ENCODE measurements at regions of chr22 and their contacts with region 1.

Region 1: DNA sequence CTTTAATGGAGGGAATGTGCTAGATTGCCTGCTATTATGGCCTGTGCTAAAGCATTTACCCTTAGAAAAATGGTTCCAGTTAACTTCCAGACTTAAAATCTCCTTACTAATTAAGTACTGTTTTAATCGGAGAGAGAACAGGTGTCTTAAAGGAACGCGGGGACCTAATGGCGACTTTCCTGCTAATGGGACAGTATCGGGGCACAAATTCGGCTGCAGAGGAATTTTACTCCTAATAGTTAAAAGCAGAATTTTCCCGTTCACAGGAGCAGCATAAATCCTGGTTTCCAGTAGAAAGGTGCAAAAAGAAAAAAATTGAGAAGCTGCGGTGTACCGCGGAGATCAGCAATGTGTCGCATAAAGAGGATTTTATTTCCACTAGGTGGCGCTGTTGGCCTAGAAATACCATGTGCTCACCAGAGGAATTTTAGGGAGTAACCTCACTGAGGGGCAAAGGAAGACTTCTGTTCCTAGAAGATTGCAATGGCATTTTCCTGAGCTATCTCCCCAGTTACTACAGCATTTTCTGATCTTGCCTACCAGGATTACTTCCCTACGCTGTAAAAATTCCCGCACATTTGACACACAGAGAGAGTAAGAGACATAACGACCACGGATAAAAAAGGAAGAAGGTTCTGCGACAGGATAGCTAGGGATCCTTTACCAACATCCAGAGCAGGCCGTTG is 44.5 kb downstream of the ZNF280B start:
- DNase-seq: peak; percentile 97 to 99 (median 99)
- ATAC-seq: peak; percentile 97
- H3K4me3 ChIP-seq: no peak overlapping the region
- H3K27ac ChIP-seq: no peak overlapping the region
- H3K4me1 ChIP-seq: peaks cover 0 to 2% of the 10 kb centered on the region in 2 experiments; a peak in 1 of 5 replicates
- H3K27me3 ChIP-seq: peaks cover 13 to 18% of the 10 kb centered on the region in 2 experiments; a peak in 4 of 5 replicates
- CTCF ChIP-seq: peak in 2 of 3 experiments; percentile 100; a peak in 4 of 6 replicates
- EP300 ChIP-seq: no peak; the same call in 1 of the 2 replicates
- POLR2A ChIP-seq: no peak
- RAD21 ChIP-seq: peak in 1 of 2 experiments; percentile 100; a peak in 2 of 4 replicates

Region 2: GRCh38 chr22:21657361-21658032 is 806.5 kb before region 1 on chr22:
- CTCF ChIA-PET with region 1: no interaction called
- POLR2A ChIA-PET with region 1: no interaction called
- in situ Hi-C with region 1: no loop called
- intact Hi-C with region 1: no loop called
- DNase-seq: peak; percentile 100
- ATAC-seq: peak; percentile 95
- H3K4me3 ChIP-seq: peak overlapping the region; percentile 47
- H3K27ac ChIP-seq: peak overlapping the region; percentile 47
- H3K4me1 ChIP-seq: peaks cover 21 to 42% of the 10 kb centered on the region in 2 experiments
- H3K27me3 ChIP-seq: no peaks in the 10 kb centered on the region
- CTCF ChIP-seq: peak in 2 of 3 experiments; percentile 79 to 89; a peak in 4 of 6 replicates
- EP300 ChIP-seq: peak; percentile 19; the same call in 1 of the 2 replicates
- POLR2A ChIP-seq: no peak
- RAD21 ChIP-seq: no peak

Region 3: DNA sequence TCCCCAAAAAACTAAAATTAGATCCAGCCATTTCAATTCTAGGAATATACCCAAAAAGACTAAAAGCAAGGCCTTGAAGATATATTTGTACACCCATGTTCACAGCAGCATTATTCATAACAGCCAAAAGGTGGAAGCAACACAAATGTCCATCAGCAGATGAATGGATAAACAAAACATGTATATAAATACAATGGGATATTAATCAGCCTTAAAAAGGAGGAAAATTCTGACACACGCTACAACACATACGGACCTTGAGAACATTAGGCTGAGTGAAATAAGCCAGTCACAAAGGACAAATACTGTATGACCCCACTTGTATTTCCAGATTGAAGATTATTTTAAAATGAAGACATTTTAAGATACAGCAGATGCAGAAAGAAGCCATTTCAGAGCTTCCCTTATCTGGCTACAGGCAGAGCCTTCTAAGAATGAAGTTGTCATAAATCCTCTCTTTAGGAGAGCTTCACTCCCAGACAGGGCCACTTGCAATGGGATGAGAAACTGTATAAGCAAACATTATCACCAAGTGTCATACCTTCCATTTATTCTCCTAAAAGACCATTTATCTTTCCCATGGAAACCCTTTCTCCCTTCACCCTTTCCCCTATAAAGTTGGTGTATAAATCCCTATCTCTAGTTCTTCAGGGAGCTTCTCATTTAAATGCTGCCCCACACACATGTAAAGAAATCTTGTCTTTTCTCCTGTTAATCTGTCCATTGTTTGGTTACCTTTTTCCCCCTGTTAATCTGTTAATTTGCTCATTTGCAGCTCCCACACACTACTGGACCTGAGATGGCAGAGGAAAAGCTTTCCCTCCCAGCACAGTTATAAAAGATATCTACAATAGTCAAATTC is 462.1 kb before region 1 on chr22:
- CTCF ChIA-PET with region 1: no interaction called
- POLR2A ChIA-PET with region 1: no interaction called
- in situ Hi-C with region 1: no loop called
- intact Hi-C with region 1: no loop called
- DNase-seq: peak in 2 of 4 experiments; percentile 82 to 89
- ATAC-seq: peak; percentile 84
- H3K4me3 ChIP-seq: no peak overlapping the region
- H3K27ac ChIP-seq: peak overlapping the region; percentile 12; the same call in 1 of the 3 replicates
- H3K4me1 ChIP-seq: peaks cover 11 to 29% of the 10 kb centered on the region in 2 experiments
- H3K27me3 ChIP-seq: peaks cover 0 to 6% of the 10 kb centered on the region in 2 experiments; a peak in 3 of 5 replicates
- CTCF ChIP-seq: no peak
- EP300 ChIP-seq: no peak
- POLR2A ChIP-seq: no peak
- RAD21 ChIP-seq: no peak

Region 4: GRCh38 chr22:22374579-22374978 is 89.4 kb before region 1 on chr22:
- CTCF ChIA-PET with region 1: no interaction called
- POLR2A ChIA-PET with region 1: no interaction called
- in situ Hi-C with region 1: no loop called
- intact Hi-C with region 1: no loop called
- DNase-seq: no peak
- ATAC-seq: no peak
- H3K4me3 ChIP-seq: no peak overlapping the region
- H3K27ac ChIP-seq: no peak overlapping the region
- H3K4me1 ChIP-seq: no peaks in the 10 kb centered on the region
- H3K27me3 ChIP-seq: peaks cover 2 to 42% of the 10 kb centered on the region in 2 experiments; a peak in 3 of 5 replicates
- CTCF ChIP-seq: no peak
- EP300 ChIP-seq: no peak
- POLR2A ChIP-seq: no peak
- RAD21 ChIP-seq: no peak

Region 5: GRCh38 chr22:22431271-22432220 is 32.5 kb before region 1 on chr22:
- CTCF ChIA-PET with region 1: interaction called, 17 read pairs
- POLR2A ChIA-PET with region 1: no interaction called
- in situ Hi-C with region 1: no loop called
- intact Hi-C with region 1: loop called (anchors 1 kb)
- DNase-seq: peak; percentile 95 to 99 (median 98)
- ATAC-seq: peak; percentile 98
- H3K4me3 ChIP-seq: no peak overlapping the region
- H3K27ac ChIP-seq: no peak overlapping the region
- H3K4me1 ChIP-seq: no peaks in the 10 kb centered on the region
- H3K27me3 ChIP-seq: peaks cover 18 to 32% of the 10 kb centered on the region in 2 experiments; a peak in 4 of 5 replicates
- CTCF ChIP-seq: peak; percentile 97 to 100 (median 99)
- EP300 ChIP-seq: no peak
- POLR2A ChIP-seq: no peak
- RAD21 ChIP-seq: peak; percentile 92 to 99

Region 6: DNA sequence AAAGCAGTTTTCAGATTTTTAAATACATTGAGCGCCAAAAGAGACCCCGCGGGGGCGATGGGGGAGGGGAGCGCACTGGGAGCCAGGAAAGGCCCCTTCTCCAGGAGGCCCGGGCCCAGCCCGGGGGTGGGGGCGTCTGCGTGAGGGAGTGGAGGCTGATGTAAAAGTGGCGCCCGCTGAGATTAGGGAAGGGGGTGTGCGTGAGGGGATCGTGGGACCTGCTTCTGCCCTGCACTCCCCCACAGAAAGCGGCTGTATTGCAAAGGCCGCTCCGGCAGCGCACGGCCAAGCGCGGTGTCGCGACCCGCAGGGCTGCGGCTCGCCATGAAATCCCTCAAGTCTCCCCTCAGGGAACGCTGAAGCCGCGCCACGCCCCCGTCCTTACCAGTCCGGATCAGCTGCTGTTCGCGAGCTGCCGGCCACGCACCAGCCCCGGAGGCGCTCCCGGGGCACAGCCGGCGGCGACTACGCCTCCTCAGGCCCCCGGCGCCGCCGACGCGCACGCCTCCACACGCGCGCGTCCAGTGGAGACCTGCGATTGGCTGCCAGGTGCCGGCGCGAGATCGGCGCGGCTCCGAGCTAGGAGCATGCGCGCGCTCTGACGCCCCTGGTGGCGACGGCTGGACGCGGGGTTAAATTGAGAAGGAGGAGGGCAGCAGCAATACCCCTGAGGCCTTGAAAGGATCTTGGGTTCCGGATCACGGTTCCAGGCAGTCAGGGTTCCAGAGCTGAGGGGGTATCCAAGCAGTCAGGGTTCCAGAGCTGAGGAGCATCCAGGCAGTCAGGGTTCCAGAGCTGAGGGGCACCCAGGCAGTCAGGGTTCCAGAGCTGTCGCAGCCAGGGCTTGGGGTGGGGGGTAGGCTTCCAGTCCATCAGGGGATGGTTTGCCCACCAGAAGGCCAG is 44.5 kb after region 1 on chr22 and contains the start of gene ZNF280B:
- CTCF ChIA-PET with region 1: interaction called, 10 read pairs
- POLR2A ChIA-PET with region 1: no interaction called
- in situ Hi-C with region 1: no loop called
- intact Hi-C with region 1: no loop called
- DNase-seq: peak; percentile 100
- ATAC-seq: peak; percentile 99
- H3K4me3 ChIP-seq: peak within 1 kb of the TSS; percentile 54
- H3K27ac ChIP-seq: peak within 1 kb of the TSS; percentile 63
- H3K4me1 ChIP-seq: peaks cover 12 to 13% of the 10 kb centered on the region in 2 experiments; a peak in 4 of 5 replicates
- H3K27me3 ChIP-seq: no peaks in the 10 kb centered on the region
- CTCF ChIP-seq: no peak
- EP300 ChIP-seq: no peak
- POLR2A ChIP-seq: no peak
- RAD21 ChIP-seq: no peak
- polyA plus RNA-seq, gene ZNF280B: 24.0 to 29.9 TPM

Region 7: DNA sequence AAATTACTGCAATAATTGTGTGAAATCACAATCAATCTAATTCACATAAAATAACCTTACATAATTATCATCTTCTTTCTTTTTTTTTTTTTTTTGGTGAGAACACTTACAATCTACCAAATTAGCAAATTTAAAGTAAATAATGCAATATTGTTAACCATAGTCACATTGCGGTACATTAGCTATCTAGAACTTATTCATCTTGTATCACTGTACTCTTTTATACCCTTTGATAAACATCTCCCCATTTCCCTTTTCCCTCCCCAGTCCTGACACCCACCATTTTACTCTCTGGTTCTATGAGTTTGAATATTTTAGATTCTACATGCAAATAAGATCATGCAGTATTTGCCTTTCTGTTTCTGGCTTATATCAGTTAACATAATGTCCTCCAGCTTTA is 119.0 kb after region 1 on chr22:
- CTCF ChIA-PET with region 1: interaction called, 58 read pairs
- POLR2A ChIA-PET with region 1: interaction called, 6 read pairs
- in situ Hi-C with region 1: no loop called
- intact Hi-C with region 1: loop called (anchors 1 kb)
- DNase-seq: no peak
- ATAC-seq: no peak
- H3K4me3 ChIP-seq: no peak overlapping the region
- H3K27ac ChIP-seq: no peak overlapping the region
- H3K4me1 ChIP-seq: peaks cover 0 to 10% of the 10 kb centered on the region in 2 experiments; a peak in 3 of 5 replicates
- H3K27me3 ChIP-seq: peaks cover 29 to 41% of the 10 kb centered on the region in 2 experiments
- CTCF ChIP-seq: no peak
- EP300 ChIP-seq: no peak
- POLR2A ChIP-seq: no peak
- RAD21 ChIP-seq: no peak

Region 8: DNA sequence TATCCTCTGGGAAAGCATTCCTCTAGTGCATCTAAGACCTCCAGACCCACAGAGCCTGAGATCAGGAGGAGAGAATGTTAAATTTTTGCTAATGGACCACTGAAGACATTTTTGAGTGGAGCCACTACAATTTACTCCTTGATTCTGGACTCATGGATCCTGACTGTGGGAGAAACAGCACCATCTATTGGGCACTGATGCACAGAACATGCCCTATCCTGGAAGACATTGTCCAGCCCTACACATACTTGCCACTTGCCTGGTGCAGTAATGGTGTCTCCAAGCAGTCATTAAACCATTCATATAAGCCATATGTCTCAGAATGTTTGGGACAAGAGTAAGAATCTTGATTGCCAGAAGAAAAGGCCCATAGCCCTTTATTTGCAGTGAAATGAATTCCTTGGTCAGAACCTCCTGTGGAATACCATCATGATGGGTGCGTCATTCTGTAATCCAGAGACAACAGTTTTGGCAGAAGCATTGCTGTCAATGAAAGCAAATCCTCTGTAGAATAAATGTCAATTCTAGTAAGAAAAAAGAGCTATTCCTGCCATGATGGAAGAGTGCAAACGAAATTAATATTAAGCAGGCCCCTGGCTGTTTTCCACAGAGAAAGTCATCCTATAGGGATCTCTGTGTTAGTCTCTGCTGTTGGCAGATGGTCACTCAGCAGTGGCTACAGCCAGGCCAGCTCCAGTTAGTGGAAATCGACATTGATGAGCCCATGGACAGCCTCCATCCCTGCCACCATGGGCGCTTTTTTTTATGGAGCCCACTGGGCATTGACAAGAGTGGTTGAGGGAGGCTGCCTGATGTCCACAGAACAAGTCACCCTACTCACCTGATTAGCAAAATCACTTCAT is 223.9 kb after region 1 on chr22:
- CTCF ChIA-PET with region 1: interaction called, 78 read pairs
- POLR2A ChIA-PET with region 1: interaction called, 6 read pairs
- in situ Hi-C with region 1: loop called (anchors 5 kb)
- intact Hi-C with region 1: loop called (anchors 2 kb)
- DNase-seq: peak; percentile 90 to 93 (median 91)
- ATAC-seq: peak; percentile 92
- H3K4me3 ChIP-seq: no peak overlapping the region
- H3K27ac ChIP-seq: no peak overlapping the region
- H3K4me1 ChIP-seq: no peaks in the 10 kb centered on the region
- H3K27me3 ChIP-seq: peaks cover 0 to 18% of the 10 kb centered on the region in 2 experiments; a peak in 2 of 5 replicates
- CTCF ChIP-seq: no peak
- EP300 ChIP-seq: no peak
- POLR2A ChIP-seq: no peak
- RAD21 ChIP-seq: no peak

Region 9: GRCh38 chr22:22748297-22748743 is 284.3 kb after region 1 on chr22:
- CTCF ChIA-PET with region 1: interaction called, 22 read pairs
- POLR2A ChIA-PET with region 1: interaction called, 3 read pairs
- in situ Hi-C with region 1: no loop called
- intact Hi-C with region 1: loop called (anchors 1 kb)
- DNase-seq: peak; percentile 73 to 86 (median 82)
- ATAC-seq: peak; percentile 87
- H3K4me3 ChIP-seq: no peak overlapping the region
- H3K27ac ChIP-seq: no peak overlapping the region
- H3K4me1 ChIP-seq: no peaks in the 10 kb centered on the region
- H3K27me3 ChIP-seq: peaks cover 4 to 30% of the 10 kb centered on the region in 2 experiments; a peak in 3 of 5 replicates
- CTCF ChIP-seq: no peak
- EP300 ChIP-seq: no peak
- POLR2A ChIP-seq: no peak
- RAD21 ChIP-seq: peak in 1 of 2 experiments; percentile 76; a peak in 2 of 4 replicates